IMR-90 (cell line): ENCODE measurements at regions of chr3 and their contacts with region 1.

Region 1: DNA sequence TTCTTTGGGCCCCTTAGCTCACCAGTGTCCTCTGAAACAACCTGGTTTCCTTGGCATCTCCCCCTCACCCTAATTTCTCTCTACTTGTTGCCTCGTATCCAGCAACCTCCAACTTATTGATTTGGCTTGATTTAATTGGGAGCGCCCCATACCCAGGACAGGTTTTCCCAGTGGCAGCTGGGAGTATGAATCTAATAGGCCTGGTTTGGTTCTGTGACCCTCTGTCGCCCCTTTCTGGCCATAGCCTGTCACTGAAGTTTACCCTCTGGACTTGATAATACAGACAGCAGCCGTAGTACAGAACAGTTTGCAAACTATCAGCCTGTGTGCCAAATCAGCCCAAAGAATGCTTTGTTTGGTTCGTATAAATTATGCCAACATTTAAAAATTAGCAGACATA is 525.1 kb upstream of the GOLIM4 start:
- DNase-seq: no peak
- ATAC-seq: peak; percentile 72; the same call in 1 of the 2 replicates
- H3K4me3 ChIP-seq: no peak overlapping the region
- H3K27ac ChIP-seq: no peak overlapping the region
- H3K4me1 ChIP-seq: no peaks in the 10 kb centered on the region
- H3K27me3 ChIP-seq: no peaks in the 10 kb centered on the region
- CTCF ChIP-seq: peak; percentile 43
- POLR2A ChIP-seq: no peak
- RAD21 ChIP-seq: peak; percentile 41; the same call in 1 of the 2 replicates

Region 2: DNA sequence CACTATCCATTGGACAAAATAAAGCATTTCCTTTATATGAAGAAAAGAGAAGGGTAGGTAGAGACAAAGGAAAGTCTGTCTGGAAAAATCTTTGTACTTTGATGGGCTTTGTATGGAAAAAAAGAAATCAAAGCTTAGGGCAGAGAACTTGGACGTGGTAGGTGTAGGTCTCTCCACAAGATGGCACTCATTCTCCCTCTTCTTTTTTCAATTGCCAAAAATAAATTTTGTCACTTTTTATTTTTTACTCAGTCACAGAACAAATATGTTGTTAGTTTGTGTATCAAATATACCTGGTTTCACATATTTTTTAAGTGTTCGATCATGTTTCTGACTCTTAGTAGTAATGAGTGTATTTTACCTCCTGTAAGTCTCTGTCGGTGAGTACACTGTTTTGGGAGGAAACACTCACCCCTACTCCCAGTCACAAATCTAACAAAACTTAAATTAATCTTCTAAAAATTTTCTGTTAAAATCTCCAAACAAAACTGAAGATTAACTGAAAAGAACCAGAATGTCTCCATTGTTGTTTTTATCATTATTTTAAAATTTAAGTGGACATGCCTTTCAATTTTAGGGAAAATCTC is 109.3 kb before region 1 on chr3:
- CTCF ChIA-PET with region 1: no interaction called
- POLR2A ChIA-PET with region 1: no interaction called
- dilution Hi-C with region 1: no loop called
- in situ Hi-C with region 1: no loop called
- intact Hi-C with region 1: loop called (anchors 5 kb)
- DNase-seq: peak; percentile 20
- ATAC-seq: peak; percentile 40; the same call in 1 of the 2 replicates
- H3K4me3 ChIP-seq: no peak overlapping the region
- H3K27ac ChIP-seq: no peak overlapping the region
- H3K4me1 ChIP-seq: no peaks in the 10 kb centered on the region
- H3K27me3 ChIP-seq: no peaks in the 10 kb centered on the region
- CTCF ChIP-seq: peak; percentile 66
- POLR2A ChIP-seq: no peak
- RAD21 ChIP-seq: peak; percentile 57